ENCODE measurements at regions of chr2 and their contacts with region 1.

Region 1: DNA sequence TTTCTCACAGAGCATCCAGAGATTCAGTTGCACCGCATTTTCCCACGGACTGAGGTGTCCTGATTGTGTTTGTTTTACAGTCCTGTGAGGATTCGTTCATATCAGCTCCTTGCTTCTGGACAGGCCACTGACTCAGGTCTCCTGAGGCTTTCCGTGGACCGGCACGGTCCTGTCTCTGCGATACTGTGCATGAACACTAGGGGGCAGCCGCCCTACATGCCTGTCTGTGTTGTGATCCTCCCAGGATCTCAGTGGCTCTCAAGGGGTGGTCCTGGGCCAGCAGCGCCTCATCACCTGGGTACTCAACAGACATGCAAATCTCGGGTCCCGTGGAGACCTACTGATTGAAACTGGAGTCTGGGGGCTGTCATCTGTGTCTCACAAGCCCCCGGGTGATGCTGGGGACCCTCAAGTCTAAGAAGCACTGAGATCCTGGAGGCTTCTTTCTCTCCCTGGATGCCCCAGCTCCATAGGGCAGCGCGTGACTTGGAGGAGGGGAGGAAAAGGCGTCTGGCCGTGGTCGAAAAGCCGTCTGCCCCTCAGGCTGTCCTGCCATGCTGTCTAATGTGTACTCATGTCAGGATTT is 28.9 kb downstream of the IL1R2 start:
- DNase-seq: peak; percentile 90 to 92
- H3K4me3 ChIP-seq: no peak overlapping the region
- H3K27ac ChIP-seq: peak overlapping the region; percentile 9 to 43
- H3K4me1 ChIP-seq: no peaks in the 10 kb centered on the region
- H3K27me3 ChIP-seq: no peaks in the 10 kb centered on the region
- CTCF ChIP-seq: peak; percentile 96 to 100 (median 98)
- POLR2A ChIP-seq: peak in 1 of 2 donors; percentile 15

Region 2: DNA sequence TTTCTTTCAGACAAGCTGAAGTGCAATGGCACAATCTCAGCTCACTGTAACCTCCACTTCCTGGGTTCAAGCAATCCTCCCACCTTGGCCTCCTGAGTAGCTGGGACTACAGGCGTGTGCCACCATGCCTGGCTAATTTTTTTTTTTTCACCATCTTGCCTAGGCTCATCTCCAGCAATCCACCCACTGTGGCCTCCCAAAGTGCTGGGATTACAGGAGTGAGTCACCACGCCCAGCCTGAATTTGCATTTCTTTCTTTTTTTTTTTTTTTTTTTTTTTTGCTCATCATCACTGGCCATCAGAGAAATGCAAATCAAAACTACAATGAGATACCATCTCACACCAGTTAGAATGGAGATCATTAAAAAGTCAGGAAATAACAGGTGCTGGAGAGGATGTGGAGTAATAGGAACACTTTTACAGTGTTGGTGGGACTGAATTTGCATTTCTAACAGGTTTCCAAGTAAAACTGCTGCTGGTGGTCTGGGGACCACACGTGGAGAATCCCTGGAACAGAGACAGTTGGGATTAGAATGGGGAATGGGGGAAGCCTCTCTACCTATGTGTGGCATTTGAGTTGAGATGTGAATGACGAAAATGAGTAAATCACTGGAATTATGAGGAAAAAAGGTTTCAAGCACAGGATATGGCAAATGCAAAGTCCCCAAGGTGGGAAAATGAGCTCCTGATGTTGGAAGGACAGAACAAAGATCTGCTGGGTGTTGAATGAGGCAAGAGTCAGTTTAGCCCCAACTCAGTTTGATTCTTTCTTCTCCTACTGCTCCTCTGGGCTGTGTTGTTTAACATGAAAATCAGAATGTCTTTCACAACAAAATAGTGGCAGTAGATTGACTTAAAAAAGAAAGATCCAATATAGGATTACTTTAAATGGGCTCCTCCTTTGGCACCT is 412.0 kb before region 1 on chr2:
- intact Hi-C with region 1: no loop called
- DNase-seq: no peak
- H3K4me3 ChIP-seq: no peak overlapping the region
- H3K27ac ChIP-seq: no peak overlapping the region
- H3K4me1 ChIP-seq: no peaks in the 10 kb centered on the region
- H3K27me3 ChIP-seq: no peaks in the 10 kb centered on the region
- CTCF ChIP-seq: no peak
- POLR2A ChIP-seq: no peak

Region 3: GRCh38 chr2:102141970-102142828 is 121.5 kb after region 1 on chr2 and contains the start of gene IL1R1:
- intact Hi-C with region 1: loop called (anchors 10 kb)
- DNase-seq: peak; percentile 70 to 86
- H3K4me3 ChIP-seq: peak within 1 kb of the TSS; percentile 57 to 71
- H3K27ac ChIP-seq: peak within 1 kb of the TSS; percentile 75 to 94
- H3K4me1 ChIP-seq: no peaks in the 10 kb centered on the region
- H3K27me3 ChIP-seq: no peaks in the 10 kb centered on the region
- CTCF ChIP-seq: peak in 1 of 4 experiments; percentile 9
- POLR2A ChIP-seq: peak; percentile 74 to 75
- total RNA-seq, gene IL1R1: 43.8 to 94.9 (median 70.1) TPM

Region 4: GRCh38 chr2:102240640-102241370 is 220.1 kb after region 1 on chr2:
- intact Hi-C with region 1: loop called (anchors 5 kb)
- DNase-seq: peak; percentile 91
- H3K4me3 ChIP-seq: no peak overlapping the region
- H3K27ac ChIP-seq: peak overlapping the region; percentile 69 to 84
- H3K4me1 ChIP-seq: no peaks in the 10 kb centered on the region
- H3K27me3 ChIP-seq: no peaks in the 10 kb centered on the region
- CTCF ChIP-seq: peak; percentile 93 to 98 (median 96)
- POLR2A ChIP-seq: no peak

Region 5: DNA sequence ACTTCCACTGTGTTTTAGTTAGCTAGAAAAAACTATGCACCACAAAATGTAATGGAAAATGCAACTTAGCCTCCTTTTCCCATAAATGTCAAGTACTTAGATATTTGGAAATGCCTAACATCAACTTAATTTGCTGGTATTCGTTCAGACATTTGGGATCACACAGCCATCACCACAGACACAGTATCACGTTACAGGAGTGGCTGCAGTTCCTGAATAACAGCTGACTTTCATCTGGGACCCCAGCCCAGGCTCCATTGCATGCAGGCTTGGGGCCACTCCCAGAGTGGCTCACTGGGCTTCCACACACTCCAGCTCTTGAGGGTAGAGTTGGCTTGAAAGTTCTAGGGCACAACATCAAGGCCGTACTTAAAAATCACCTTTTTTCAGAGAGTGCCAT is 750.4 kb after region 1 on chr2:
- intact Hi-C with region 1: no loop called
- DNase-seq: no peak
- H3K4me3 ChIP-seq: no peak overlapping the region
- H3K27ac ChIP-seq: no peak overlapping the region
- H3K4me1 ChIP-seq: no peaks in the 10 kb centered on the region
- H3K27me3 ChIP-seq: no peaks in the 10 kb centered on the region
- CTCF ChIP-seq: no peak
- POLR2A ChIP-seq: no peak

Measured in uterus (tissue), 4 donors.